Activated CD4-positive, alpha-beta T cell treated with anti-CD3 and anti-CD28 coated beads, Interleukin-2, amount 10 ng/mL, durations not matched to agents 24 days and 14 days (primary cell): ENCODE measurements at regions of chr5 and their contacts with region 1.

Region 1: DNA sequence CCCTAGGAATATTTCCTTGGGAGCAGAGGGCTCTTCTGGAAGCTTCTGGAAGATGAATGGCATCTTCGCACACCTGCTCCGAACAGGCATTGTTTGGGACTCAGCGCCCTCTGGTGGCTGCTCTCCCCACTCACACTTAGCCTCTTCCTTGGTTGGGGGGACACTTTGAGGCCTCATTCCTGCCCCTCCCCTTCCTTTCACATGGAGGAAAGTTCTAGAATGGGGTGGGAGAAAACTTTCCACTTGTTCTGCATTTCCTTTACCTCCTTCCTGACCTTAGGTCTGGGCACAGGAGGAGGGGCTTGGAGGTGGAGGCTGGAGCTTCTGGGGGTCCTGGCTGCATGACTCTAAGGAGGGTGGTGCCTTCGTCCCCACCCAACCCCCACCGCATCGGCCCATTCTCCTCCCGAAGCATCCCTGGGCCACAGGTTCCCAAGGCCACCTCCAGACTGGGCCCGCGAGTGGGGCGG is 19.3 kb upstream of the SMIM32 start:
- DNase-seq: peak; percentile 83
- H3K4me3 Mint-ChIP-seq: no peak overlapping the region
- H3K27ac Mint-ChIP-seq: no peak overlapping the region
- H3K4me1 Mint-ChIP-seq: peaks cover 2% of the 10 kb centered on the region
- H3K27me3 Mint-ChIP-seq: peaks cover 4% of the 10 kb centered on the region

Region 2: GRCh38 chr5:135944967-135945560 is 267.2 kb before region 1 on chr5:
- intact Hi-C with region 1: loop called (anchors 1 kb)
- DNase-seq: peak; percentile 74
- H3K4me3 Mint-ChIP-seq: no peak overlapping the region
- H3K27ac Mint-ChIP-seq: no peak overlapping the region
- H3K4me1 Mint-ChIP-seq: no peaks in the 10 kb centered on the region
- H3K27me3 Mint-ChIP-seq: no peaks in the 10 kb centered on the region

Region 3: DNA sequence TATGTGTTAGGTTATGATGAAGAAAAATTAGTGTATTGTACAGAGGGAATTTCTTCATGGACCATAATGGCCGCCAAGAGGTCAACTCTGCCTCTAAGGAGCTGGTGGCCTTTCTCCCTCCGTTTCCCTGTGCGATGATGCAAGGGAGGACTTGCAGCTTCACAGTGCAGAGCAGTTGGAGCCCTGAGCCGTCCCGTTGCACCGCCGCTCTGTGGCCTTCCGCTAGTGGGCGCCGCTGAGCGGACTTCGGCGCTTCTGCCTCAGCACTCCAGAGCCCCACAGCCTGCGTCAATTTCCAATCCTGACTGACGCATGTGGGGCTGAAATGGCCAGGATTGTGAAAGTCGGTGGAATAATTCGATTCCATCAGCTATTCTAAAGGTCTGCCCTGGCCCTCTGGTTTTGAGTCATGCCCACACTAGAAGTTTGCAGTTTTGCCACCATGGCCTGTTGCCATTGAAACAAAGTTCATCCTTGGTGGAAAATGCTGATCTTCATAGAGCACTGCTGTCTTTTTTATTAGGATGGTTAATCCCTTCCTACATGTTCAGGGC is 234.8 kb before region 1 on chr5:
- intact Hi-C with region 1: loop called (anchors 1 kb)
- DNase-seq: peak; percentile 85
- H3K4me3 Mint-ChIP-seq: no peak overlapping the region
- H3K27ac Mint-ChIP-seq: no peak overlapping the region
- H3K4me1 Mint-ChIP-seq: no peaks in the 10 kb centered on the region
- H3K27me3 Mint-ChIP-seq: peaks cover 35% of the 10 kb centered on the region